AG04450 (cell line): ENCODE measurements at regions of chr3 and their contacts with region 1.

Region 1: GRCh38 chr3:146065573-146066006 is 95.4 kb downstream of the PLOD2 start:
- DNase-seq: peak; percentile 48
- H3K4me3 ChIP-seq: no peak overlapping the region
- H3K27ac ChIP-seq: no peak overlapping the region
- H3K27me3 ChIP-seq: no peaks in the 10 kb centered on the region
- CTCF ChIP-seq: peak; percentile 72

Region 2: GRCh38 chr3:146052791-146053310 is 12.7 kb before region 1 on chr3:
- CTCF ChIA-PET with region 1: interaction called, 21 read pairs
- POLR2A ChIA-PET with region 1: no interaction called
- DNase-seq: no peak
- H3K4me3 ChIP-seq: no peak overlapping the region
- H3K27ac ChIP-seq: no peak overlapping the region
- H3K27me3 ChIP-seq: no peaks in the 10 kb centered on the region
- CTCF ChIP-seq: no peak

Region 3: GRCh38 chr3:146160964-146161662 is 95.5 kb after region 1 on chr3 and contains the start of gene PLOD2:
- CTCF ChIA-PET with region 1: interaction called, 62 read pairs
- POLR2A ChIA-PET with region 1: interaction called, 13 read pairs
- DNase-seq: no peak
- H3K4me3 ChIP-seq: peak within 1 kb of the TSS; percentile 75
- H3K27ac ChIP-seq: peak within 1 kb of the TSS; percentile 90
- H3K27me3 ChIP-seq: no peaks in the 10 kb centered on the region
- CTCF ChIP-seq: no peak
- polyA plus RNA-seq, gene PLOD2: 63.7 and 88.9 TPM in 2 replicates

Region 4: GRCh38 chr3:146184616-146185015 is 119.0 kb after region 1 on chr3:
- CTCF ChIA-PET with region 1: interaction called, 270 read pairs
- POLR2A ChIA-PET with region 1: no interaction called
- DNase-seq: no peak
- H3K4me3 ChIP-seq: no peak overlapping the region
- H3K27ac ChIP-seq: no peak overlapping the region
- H3K27me3 ChIP-seq: no peaks in the 10 kb centered on the region
- CTCF ChIP-seq: no peak

Region 5: DNA sequence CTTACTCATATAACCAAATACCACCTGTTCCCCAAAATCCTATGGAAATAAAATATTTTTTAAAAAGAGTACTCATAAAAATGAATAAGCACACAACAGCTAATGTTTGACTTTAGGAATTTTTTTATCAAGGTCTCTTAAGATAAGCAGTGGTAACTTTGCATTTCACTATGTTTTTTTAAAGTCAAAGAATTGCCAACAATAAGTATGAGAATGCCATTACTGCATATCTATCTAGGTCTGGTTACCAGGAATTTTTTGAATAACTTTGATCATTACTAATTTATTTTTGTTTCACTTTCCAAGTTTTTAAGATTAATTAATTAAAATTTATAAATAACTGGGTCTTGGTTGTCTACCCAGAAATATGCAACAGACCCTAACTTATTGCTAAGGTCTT is 143.8 kb after region 1 on chr3:
- CTCF ChIA-PET with region 1: no interaction called
- POLR2A ChIA-PET with region 1: no interaction called
- DNase-seq: no peak
- H3K4me3 ChIP-seq: no peak overlapping the region
- H3K27ac ChIP-seq: no peak overlapping the region
- H3K27me3 ChIP-seq: no peaks in the 10 kb centered on the region
- CTCF ChIP-seq: no peak